K562 (cell line): ENCODE measurements at regions of chr16 and their contacts with region 1.

Region 1: DNA sequence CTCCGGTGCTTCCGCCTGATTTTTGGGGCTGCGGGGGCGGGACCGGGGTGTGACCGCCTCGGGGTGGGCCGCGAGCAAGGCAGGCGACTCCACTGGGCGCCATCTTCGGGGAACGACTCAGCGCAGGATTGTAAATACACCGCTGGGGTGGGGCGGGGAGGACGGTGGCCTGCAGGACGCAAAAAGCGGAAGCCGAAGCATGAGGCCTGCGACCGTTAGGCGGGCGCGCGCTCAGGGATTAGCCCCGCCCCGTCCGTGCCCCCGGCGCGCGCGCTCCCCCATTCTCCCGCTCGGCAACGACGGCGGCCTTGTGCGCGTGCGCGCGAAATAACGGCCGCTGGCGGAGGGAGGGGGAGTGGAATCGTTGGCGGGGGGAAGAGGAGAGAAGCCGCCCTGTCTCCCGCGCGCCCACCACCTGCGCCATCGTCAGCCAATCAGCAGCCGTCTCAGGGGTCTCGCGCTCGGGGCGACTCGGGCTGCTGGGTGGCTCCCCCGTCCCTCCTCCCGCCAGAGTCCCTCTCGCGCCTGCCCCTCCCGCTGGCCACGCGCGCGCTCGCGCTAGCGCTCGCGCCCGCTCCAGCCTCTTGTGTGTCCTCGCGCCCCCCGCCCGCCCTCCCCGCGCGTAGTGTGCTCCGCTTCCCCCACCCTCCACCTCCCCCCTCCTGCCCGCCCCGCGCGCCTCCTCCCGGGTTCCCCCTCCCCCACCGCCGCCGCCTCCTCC is 791 bp upstream of the MAZ start:
- DNase-seq: peak; percentile 81 to 98 (median 88)
- ATAC-seq: peak; percentile 75
- H3K4me3 ChIP-seq: peak overlapping the region; percentile 59
- H3K27ac ChIP-seq: peak overlapping the region; percentile 99
- H3K4me1 ChIP-seq: peaks cover 33 to 46% of the 10 kb centered on the region in 2 experiments
- H3K27me3 ChIP-seq: no peaks in the 10 kb centered on the region
- CTCF ChIP-seq: no peak; a peak in 1 of 6 replicates
- EP300 ChIP-seq: peak; percentile 91
- POLR2A ChIP-seq: peak; percentile 88
- RAD21 ChIP-seq: no peak

Region 2: DNA sequence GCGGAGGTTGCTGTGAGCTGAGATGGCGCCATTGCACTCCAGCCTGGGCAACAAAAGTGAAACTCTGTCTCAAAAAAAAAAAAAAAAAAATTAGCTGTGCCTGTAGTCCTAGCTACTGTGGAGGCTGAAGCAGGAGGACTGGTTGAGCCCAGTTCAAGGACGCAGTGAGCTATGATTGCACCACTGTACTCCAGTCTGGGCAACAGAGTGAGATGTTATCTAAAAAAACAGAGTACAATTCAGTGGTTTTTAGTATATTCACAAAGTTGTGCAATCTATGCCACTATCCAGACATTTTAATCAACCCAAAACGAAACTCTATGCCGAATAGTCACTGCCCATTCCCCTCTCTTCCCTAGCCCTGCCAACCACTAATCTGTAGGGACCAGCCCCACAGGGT is 84.8 kb before region 1 on chr16:
- CTCF ChIA-PET with region 1: no interaction called
- POLR2A ChIA-PET with region 1: no interaction called
- in situ Hi-C with region 1: no loop called
- intact Hi-C with region 1: no loop called
- DNase-seq: no peak
- ATAC-seq: no peak
- H3K4me3 ChIP-seq: no peak overlapping the region
- H3K27ac ChIP-seq: no peak overlapping the region
- H3K4me1 ChIP-seq: no peaks in the 10 kb centered on the region; a peak in 1 of 5 replicates
- H3K27me3 ChIP-seq: no peaks in the 10 kb centered on the region
- CTCF ChIP-seq: no peak
- EP300 ChIP-seq: no peak
- POLR2A ChIP-seq: no peak
- RAD21 ChIP-seq: no peak

Region 3: GRCh38 chr16:29790183-29790952 is 15.2 kb before region 1 on chr16 and contains the start of gene KIF22:
- CTCF ChIA-PET with region 1: no interaction called
- POLR2A ChIA-PET with region 1: interaction called, 114 read pairs
- in situ Hi-C with region 1: no loop called
- intact Hi-C with region 1: loop called (anchors 1 kb)
- DNase-seq: peak; percentile 98 to 100 (median 99)
- ATAC-seq: peak; percentile 98
- H3K4me3 ChIP-seq: peak within 1 kb of the TSS; percentile 89
- H3K27ac ChIP-seq: peak within 1 kb of the TSS; percentile 97
- H3K4me1 ChIP-seq: peaks cover 14 to 17% of the 10 kb centered on the region in 2 experiments
- H3K27me3 ChIP-seq: no peaks in the 10 kb centered on the region
- CTCF ChIP-seq: peak; percentile 84 to 92 (median 88)
- EP300 ChIP-seq: peak; percentile 65
- POLR2A ChIP-seq: peak; percentile 94
- RAD21 ChIP-seq: peak; percentile 60 to 62
- polyA plus RNA-seq, gene KIF22: 8.7 to 18.2 TPM

Region 4: DNA sequence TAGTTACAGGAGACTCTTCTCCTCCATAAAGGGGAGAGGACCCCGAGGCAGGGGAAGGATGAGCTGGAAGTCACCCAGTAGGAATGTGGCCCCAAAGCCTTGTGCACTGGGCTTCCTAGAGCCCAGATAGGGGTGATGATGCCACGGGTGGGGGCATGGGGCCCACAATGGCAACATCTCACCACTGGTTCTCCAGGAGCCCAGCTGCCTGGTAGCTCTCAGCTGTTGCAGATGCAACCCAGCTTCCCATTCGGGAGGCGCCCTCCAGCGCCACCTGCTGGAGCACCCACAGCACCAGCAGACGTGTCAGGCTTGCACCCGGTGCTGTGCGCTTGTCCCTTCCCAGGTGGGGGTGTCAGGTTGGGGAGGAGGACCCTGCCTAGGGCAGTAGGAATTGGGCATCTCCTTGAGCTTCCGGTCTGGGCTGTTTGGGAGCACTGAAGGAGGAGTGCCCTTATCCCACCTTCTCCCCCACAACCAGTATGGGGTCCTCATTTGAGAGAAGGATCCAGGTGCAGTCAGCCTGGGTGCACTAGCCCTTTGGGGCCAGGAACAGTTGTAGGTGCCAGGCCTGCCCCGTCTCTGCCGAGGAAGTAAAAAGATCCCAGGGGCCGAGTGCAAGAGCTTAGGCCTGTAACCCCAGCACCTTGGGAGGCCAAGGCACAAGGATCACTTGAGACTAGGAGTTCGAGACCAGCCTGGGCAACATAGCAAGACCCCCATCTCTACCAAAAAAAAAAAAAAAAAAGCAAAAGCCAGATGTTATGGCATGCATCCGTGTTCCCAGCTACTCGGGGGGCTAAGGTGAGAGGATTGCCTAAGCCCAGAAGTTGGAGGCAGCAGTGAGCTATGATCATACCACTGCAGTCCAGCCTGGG is 43.1 kb after region 1 on chr16:
- CTCF ChIA-PET with region 1: no interaction called
- POLR2A ChIA-PET with region 1: no interaction called
- in situ Hi-C with region 1: no loop called
- intact Hi-C with region 1: loop called (anchors 2 kb)
- DNase-seq: peak; percentile 81 to 86 (median 83)
- ATAC-seq: peak; percentile 97
- H3K4me3 ChIP-seq: no peak overlapping the region
- H3K27ac ChIP-seq: no peak overlapping the region
- H3K4me1 ChIP-seq: peaks cover 0 to 28% of the 10 kb centered on the region in 2 experiments; a peak in 2 of 5 replicates
- H3K27me3 ChIP-seq: no peaks in the 10 kb centered on the region
- CTCF ChIP-seq: peak; percentile 88 to 96 (median 90)
- EP300 ChIP-seq: no peak
- POLR2A ChIP-seq: no peak
- RAD21 ChIP-seq: peak; percentile 61 to 85